WTC11 (cell line): ENCODE measurements at regions of chr19 and their contacts with region 1.

Region 1: GRCh38 chr19:6362027-6362350 is 658 bp downstream of the CLPP start:
- DNase-seq: no peak
- ATAC-seq: peak; percentile 9
- H3K4me3 Mint-ChIP-seq: peak overlapping the region; percentile 83
- H3K27ac Mint-ChIP-seq: no peak overlapping the region
- H3K4me1 Mint-ChIP-seq: peaks cover 5% of the 10 kb centered on the region; the same call in 1 of the 2 replicates
- H3K27me3 Mint-ChIP-seq: peaks cover 8% of the 10 kb centered on the region; the same call in 1 of the 2 replicates
- CTCF ChIP-seq: no peak

Region 2: GRCh38 chr19:5314907-5315298 is 1047.1 kb before region 1 on chr19:
- CTCF ChIA-PET with region 1: no interaction called
- POLR2A ChIA-PET with region 1: interaction called, 10 read pairs
- DNase-seq: no peak
- ATAC-seq: no peak
- H3K4me3 Mint-ChIP-seq: no peak overlapping the region
- H3K27ac Mint-ChIP-seq: peak overlapping the region; percentile 10; the same call in 1 of the 2 replicates
- H3K4me1 Mint-ChIP-seq: no peaks in the 10 kb centered on the region
- H3K27me3 Mint-ChIP-seq: no peaks in the 10 kb centered on the region
- CTCF ChIP-seq: no peak

Region 3: GRCh38 chr19:6372594-6373095 is 10.7 kb after region 1 on chr19 and contains the start of gene ALKBH7:
- CTCF ChIA-PET with region 1: interaction called, 18 read pairs
- POLR2A ChIA-PET with region 1: interaction called, 11 read pairs
- DNase-seq: peak; percentile 96
- ATAC-seq: peak; percentile 74
- H3K4me3 Mint-ChIP-seq: peak within 1 kb of the TSS; percentile 85
- H3K27ac Mint-ChIP-seq: peak within 1 kb of the TSS; percentile 99
- H3K4me1 Mint-ChIP-seq: peaks cover 17% of the 10 kb centered on the region
- H3K27me3 Mint-ChIP-seq: no peaks in the 10 kb centered on the region
- CTCF ChIP-seq: no peak
- total RNA-seq, gene ALKBH7: 96.4 to 119 TPM (median 114 TPM) in 3 replicates

Region 4: GRCh38 chr19:6402837-6403608 is 41.0 kb after region 1 on chr19:
- CTCF ChIA-PET with region 1: no interaction called
- POLR2A ChIA-PET with region 1: no interaction called
- DNase-seq: no peak
- ATAC-seq: no peak
- H3K4me3 Mint-ChIP-seq: no peak overlapping the region
- H3K27ac Mint-ChIP-seq: no peak overlapping the region
- H3K4me1 Mint-ChIP-seq: no peaks in the 10 kb centered on the region
- H3K27me3 Mint-ChIP-seq: no peaks in the 10 kb centered on the region
- CTCF ChIP-seq: no peak

Region 5: GRCh38 chr19:6476155-6476895 is 114.3 kb after region 1 on chr19:
- CTCF ChIA-PET with region 1: no interaction called
- POLR2A ChIA-PET with region 1: no interaction called
- DNase-seq: peak; percentile 100
- ATAC-seq: peak; percentile 88
- H3K4me3 Mint-ChIP-seq: peak overlapping the region; percentile 81
- H3K27ac Mint-ChIP-seq: peak overlapping the region; percentile 95
- H3K4me1 Mint-ChIP-seq: peaks cover 8% of the 10 kb centered on the region
- H3K27me3 Mint-ChIP-seq: peaks cover 30% of the 10 kb centered on the region
- CTCF ChIP-seq: no peak